ENCODE measurements at regions of chr14 and their contacts with region 1.

Region 1: DNA sequence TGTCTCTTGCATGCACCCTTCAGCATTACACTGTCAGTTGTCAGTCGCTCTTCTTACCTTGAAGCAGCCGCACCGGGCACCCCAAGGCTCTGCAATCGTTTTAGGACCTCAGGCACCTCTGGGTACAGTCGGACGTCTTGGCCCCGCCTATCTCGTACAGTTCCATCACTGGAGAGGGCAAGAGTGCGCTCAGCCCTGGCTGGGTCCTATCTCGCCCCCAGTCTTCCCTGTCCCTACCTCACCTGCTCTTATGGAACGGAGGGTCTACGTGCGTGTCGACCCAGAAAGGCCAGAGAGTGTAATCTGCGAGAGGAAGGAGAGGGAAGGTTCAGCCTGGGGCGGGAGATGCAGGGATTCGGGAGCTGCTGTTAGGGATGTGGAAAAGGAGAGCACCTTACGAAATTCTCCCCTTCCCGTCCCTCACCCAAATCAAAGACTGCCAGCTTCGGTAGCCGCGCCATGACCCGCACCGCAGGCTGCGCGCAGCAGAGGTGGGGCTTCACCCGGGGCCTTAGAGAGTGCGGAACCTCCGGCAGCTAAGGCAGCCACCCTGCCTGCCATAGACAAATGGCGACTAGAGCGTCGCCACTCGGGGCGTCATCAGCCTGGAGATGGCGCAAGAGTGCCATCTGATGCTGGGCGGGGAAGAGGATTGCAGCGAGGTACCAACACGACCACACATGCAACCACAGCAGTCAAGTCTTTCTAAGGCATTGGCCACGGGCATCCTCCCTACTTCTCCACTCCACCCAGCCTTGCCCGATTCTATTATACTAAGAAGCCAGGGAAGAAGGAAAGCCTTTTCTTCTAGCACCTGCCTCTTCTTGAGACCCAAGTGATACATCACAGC is at the start of gene MDP1:
- DNase-seq: peak; percentile 76 to 92 (median 85)
- H3K4me3 ChIP-seq: peak within 1 kb of the TSS; percentile 94
- H3K4me3 Mint-ChIP-seq: peak within 1 kb of the TSS; percentile 87 to 97 (median 95)
- H3K27ac ChIP-seq: peak within 1 kb of the TSS; percentile 97
- H3K27ac Mint-ChIP-seq: peak within 1 kb of the TSS; percentile 95 to 100 (median 98)
- H3K4me1 ChIP-seq: peaks cover 39% of the 10 kb centered on the region
- H3K4me1 Mint-ChIP-seq: peaks cover 38 to 54% (median 50%) of the 10 kb centered on the region in 3 donors
- H3K27me3 ChIP-seq: no peaks in the 10 kb centered on the region
- H3K27me3 Mint-ChIP-seq: no peaks in the 10 kb centered on the region
- total RNA-seq, gene MDP1: 15.5 to 16.2 TPM

Region 2: DNA sequence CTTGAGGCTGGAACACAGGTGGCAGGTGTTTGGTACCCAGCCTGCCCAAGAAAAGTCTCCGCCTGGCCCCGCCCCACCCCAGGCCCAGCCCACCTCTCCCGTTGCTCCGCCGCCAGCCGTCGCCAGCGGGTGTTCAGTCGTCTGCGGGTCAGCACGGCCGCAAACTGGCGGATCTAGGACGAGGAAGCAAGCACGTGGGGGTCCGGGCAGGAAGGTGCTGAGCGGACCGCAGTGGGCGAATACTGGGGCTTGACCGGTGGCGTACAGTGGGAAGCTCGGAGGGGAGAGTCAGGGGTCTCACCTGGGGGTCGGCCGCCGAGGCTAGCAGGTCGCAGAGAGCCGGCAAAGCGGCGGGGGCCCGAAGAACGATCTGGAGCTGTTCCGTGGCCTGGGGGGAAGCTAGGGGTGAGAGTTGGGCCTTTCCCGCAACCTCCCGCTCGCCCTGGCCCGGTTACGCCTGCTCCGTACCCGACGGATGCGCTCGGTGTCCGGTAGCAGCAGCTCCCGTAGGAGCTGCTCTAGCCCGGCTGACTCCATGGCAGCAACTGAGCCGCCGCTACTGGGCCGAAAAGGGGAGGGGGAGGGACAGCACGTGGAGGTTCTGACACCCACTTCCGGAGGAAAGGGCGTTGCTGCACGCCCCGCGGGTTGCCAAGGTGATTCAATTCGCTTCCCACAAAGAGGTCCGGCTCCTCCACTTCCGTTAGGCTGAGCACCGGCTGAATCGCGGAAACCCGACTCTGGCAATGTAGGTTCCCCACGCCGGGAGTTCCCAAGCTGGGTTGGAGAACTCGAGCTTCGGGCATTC is 27.3 kb before region 1 on chr14 and contains the start of gene IPO4:
- CTCF ChIA-PET with region 1: interaction called, 14 read pairs
- POLR2A ChIA-PET with region 1: interaction called, 16 read pairs
- DNase-seq: peak; percentile 91 to 97 (median 94)
- H3K4me3 ChIP-seq: peak within 1 kb of the TSS; percentile 85
- H3K4me3 Mint-ChIP-seq: peak within 1 kb of the TSS; percentile 90 to 95 (median 92)
- H3K27ac ChIP-seq: peak within 1 kb of the TSS; percentile 74
- H3K27ac Mint-ChIP-seq: peak within 1 kb of the TSS; percentile 80 to 99 (median 96)
- H3K4me1 ChIP-seq: peaks cover 31% of the 10 kb centered on the region
- H3K4me1 Mint-ChIP-seq: peaks cover 25 to 56% (median 43%) of the 10 kb centered on the region in 3 donors
- H3K27me3 ChIP-seq: no peaks in the 10 kb centered on the region
- H3K27me3 Mint-ChIP-seq: no peaks in the 10 kb centered on the region
- total RNA-seq, gene IPO4: 164 to 172 TPM

Region 3: GRCh38 chr14:24195191-24196070 is 20.3 kb before region 1 on chr14 and contains the start of gene TM9SF1:
- CTCF ChIA-PET with region 1: interaction called, 7 read pairs
- POLR2A ChIA-PET with region 1: interaction called, 43 read pairs
- DNase-seq: peak; percentile 89 to 98 (median 91)
- H3K4me3 ChIP-seq: peak within 1 kb of the TSS; percentile 91
- H3K4me3 Mint-ChIP-seq: peak within 1 kb of the TSS; percentile 83 to 96 (median 94)
- H3K27ac ChIP-seq: peak within 1 kb of the TSS; percentile 100
- H3K27ac Mint-ChIP-seq: peak within 1 kb of the TSS; percentile 96 to 100 (median 99)
- H3K4me1 ChIP-seq: peaks cover 32% of the 10 kb centered on the region
- H3K4me1 Mint-ChIP-seq: peaks cover 37 to 76% (median 56%) of the 10 kb centered on the region in 3 donors
- H3K27me3 ChIP-seq: no peaks in the 10 kb centered on the region
- H3K27me3 Mint-ChIP-seq: peaks cover 0 to 1% of the 10 kb centered on the region in 2 donors
- total RNA-seq, gene TM9SF1: 31.3 to 34.0 TPM

Region 4: GRCh38 chr14:24271134-24271833 is 55.6 kb after region 1 on chr14 and contains the start of gene RABGGTA:
- CTCF ChIA-PET with region 1: interaction called, 19 read pairs
- POLR2A ChIA-PET with region 1: interaction called, 8 read pairs
- DNase-seq: peak; percentile 87 to 98 (median 96)
- H3K4me3 ChIP-seq: peak within 1 kb of the TSS; percentile 63
- H3K4me3 Mint-ChIP-seq: peak within 1 kb of the TSS; percentile 88 to 93 (median 92)
- H3K27ac ChIP-seq: peak within 1 kb of the TSS; percentile 86
- H3K27ac Mint-ChIP-seq: peak within 1 kb of the TSS; percentile 96 to 99 (median 98)
- H3K4me1 ChIP-seq: peaks cover 30% of the 10 kb centered on the region
- H3K4me1 Mint-ChIP-seq: peaks cover 37 to 44% (median 41%) of the 10 kb centered on the region in 3 donors
- H3K27me3 ChIP-seq: no peaks in the 10 kb centered on the region
- H3K27me3 Mint-ChIP-seq: peaks cover 0 to 5% of the 10 kb centered on the region in 2 donors
- total RNA-seq, gene RABGGTA: 41.0 to 41.8 TPM

Region 5: GRCh38 chr14:24299255-24300195 is 83.8 kb after region 1 on chr14 and contains the starts of genes DHRS1 and NOP9:
- CTCF ChIA-PET with region 1: interaction called, 16 read pairs
- POLR2A ChIA-PET with region 1: interaction called, 6 read pairs
- DNase-seq: peak; percentile 87 to 93 (median 89)
- H3K4me3 ChIP-seq: peak within 1 kb of the TSS; percentile 83
- H3K4me3 Mint-ChIP-seq: peak within 1 kb of the TSS; percentile 89 to 97 (median 92)
- H3K27ac ChIP-seq: peak within 1 kb of the TSS; percentile 79
- H3K27ac Mint-ChIP-seq: peak within 1 kb of the TSS; percentile 94 to 99 (median 96)
- H3K4me1 ChIP-seq: peaks cover 47% of the 10 kb centered on the region
- H3K4me1 Mint-ChIP-seq: peaks cover 41 to 59% (median 54%) of the 10 kb centered on the region in 3 donors
- H3K27me3 ChIP-seq: no peaks in the 10 kb centered on the region
- H3K27me3 Mint-ChIP-seq: no peaks in the 10 kb centered on the region
- total RNA-seq, gene DHRS1: 9.3 to 9.8 TPM
- total RNA-seq, gene NOP9: 44.1 to 47.1 TPM

Region 6: GRCh38 chr14:24556756-24557155 is 341.0 kb after region 1 on chr14:
- CTCF ChIA-PET with region 1: no interaction called
- POLR2A ChIA-PET with region 1: no interaction called
- DNase-seq: no peak
- H3K4me3 ChIP-seq: no peak overlapping the region
- H3K4me3 Mint-ChIP-seq: no peak overlapping the region
- H3K27ac ChIP-seq: no peak overlapping the region
- H3K27ac Mint-ChIP-seq: no peak overlapping the region
- H3K4me1 ChIP-seq: no peaks in the 10 kb centered on the region
- H3K4me1 Mint-ChIP-seq: no peaks in the 10 kb centered on the region
- H3K27me3 ChIP-seq: peaks cover 4% of the 10 kb centered on the region
- H3K27me3 Mint-ChIP-seq: peaks cover 4 to 35% of the 10 kb centered on the region in 2 donors

Measured in CD8-positive, alpha-beta memory T cell (primary cell).